Adrenal gland (tissue), 19 donors: ENCODE measurements at regions of chr1 and their contacts with region 1.

Region 1: DNA sequence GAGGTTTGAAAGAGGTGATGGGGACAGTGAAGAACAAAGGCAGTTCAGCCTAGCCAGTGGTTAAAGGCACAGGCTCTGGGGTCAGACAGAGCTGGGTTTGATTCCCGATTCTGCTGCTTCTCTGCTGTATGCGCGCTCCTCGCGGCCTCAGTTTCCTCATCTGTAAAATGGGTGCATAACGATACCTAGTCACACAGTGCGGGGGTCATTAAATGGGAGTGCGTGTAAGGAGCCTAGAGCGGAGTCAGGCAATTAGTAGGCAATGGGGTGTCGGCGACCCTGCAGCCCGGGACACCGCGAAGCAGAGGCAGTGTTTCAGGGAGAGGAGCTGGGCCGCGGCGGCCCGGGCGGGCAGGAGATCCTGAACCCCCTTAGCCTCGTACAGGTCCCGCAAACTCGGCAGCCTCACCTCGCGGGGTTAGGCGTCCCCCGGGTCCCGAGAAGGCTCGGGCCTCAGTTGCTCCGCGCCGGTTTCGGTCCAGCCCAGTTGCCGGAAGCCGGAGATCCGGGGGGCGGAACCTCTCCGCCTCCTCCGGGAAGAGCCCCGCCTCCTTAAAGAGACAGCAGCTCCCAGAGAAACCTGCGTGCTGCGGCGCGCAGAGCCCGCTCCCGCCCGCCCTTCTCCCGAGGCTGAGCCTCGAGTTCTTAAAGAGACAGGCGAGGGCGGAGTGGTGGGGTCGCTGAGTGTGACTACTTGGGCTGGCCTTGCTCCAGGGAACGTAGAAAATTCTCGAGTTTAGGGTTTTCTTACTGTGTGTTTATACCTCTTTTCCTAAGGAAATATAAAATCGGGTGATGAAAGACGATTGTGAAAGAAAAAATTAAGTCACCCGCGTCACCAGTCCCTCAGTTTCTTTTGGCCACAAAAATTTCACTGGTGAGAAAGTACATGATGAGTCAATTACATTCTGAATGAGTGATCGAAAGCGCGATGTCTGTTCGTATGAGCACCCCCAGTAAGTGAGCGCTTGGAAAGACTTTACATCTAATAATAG is at the start of gene YIPF1:
- DNase-seq: peak; percentile 90 to 95 (median 92)
- H3K4me3 ChIP-seq: peak within 1 kb of the TSS; percentile 21 to 94 (median 71)
- H3K27ac ChIP-seq: peak within 1 kb of the TSS; percentile 39 to 79 (median 79)
- H3K4me1 ChIP-seq: peaks cover 10 to 21% of the 10 kb centered on the region in 2 donors
- H3K27me3 ChIP-seq: no peaks in the 10 kb centered on the region
- CTCF ChIP-seq: no peak
- POLR2A ChIP-seq: peak; percentile 5 to 70
- total RNA-seq, gene YIPF1: 24.8 to 59.5 (median 40.0) TPM

Region 2: DNA sequence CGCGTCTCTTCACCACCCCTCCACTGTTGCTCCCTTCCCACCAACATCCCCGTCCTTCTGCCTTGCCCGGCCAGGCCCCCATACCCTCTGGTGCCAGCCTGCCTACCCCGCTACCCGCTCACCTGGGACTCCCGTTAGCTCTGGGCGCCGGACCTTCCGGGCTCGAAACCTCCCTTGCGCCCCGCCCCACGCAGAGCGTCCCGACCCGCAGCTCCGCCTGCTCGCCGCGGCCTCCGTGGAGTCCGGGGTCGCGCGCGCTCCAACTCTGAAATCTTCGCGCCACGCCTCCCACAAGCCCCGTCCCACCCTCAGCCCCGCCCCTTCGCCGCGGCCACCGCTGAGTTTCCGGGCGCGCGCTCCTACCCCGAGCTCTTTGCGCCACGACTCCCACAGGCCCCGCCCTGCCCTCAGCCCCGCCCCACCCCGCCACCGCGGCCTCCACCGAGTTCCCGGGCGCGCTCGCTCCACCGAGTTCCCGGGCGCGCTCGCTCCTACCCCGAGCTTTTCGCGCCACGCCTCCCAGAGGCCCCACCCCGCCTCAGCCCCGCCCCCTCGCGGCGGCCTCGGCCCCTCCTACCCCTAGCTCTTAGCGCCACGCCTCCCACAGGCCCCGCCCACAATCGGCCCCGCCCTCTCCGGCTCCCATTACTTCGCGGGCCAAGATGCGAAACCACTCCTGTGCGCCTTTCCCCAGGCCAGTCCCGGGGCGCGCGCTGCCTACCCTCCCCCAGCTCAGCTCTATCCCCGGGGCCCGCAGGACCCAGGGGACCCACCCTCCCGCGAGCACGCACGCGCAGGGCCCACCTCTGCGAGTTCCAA is 56.0 kb after region 1 on chr1 and contains the start of gene IFT25:
- intact Hi-C with region 1: loop called (anchors 5 to 10 kb)
- DNase-seq: peak; percentile 96 to 99 (median 97)
- H3K4me3 ChIP-seq: peak within 1 kb of the TSS; percentile 21 to 94 (median 78)
- H3K27ac ChIP-seq: peak within 1 kb of the TSS; percentile 70 to 96 (median 93)
- H3K4me1 ChIP-seq: peaks cover 13 to 43% of the 10 kb centered on the region in 2 donors
- H3K27me3 ChIP-seq: no peaks in the 10 kb centered on the region
- CTCF ChIP-seq: no peak
- POLR2A ChIP-seq: peak; percentile 44 to 87
- total RNA-seq, gene IFT25: 7.2 to 53.1 (median 26.6) TPM

Region 3: GRCh38 chr1:53979712-53980450 is 90.3 kb after region 1 on chr1:
- intact Hi-C with region 1: no loop called
- DNase-seq: no peak
- H3K4me3 ChIP-seq: no peak overlapping the region
- H3K27ac ChIP-seq: no peak overlapping the region
- H3K4me1 ChIP-seq: no peaks in the 10 kb centered on the region
- H3K27me3 ChIP-seq: no peaks in the 10 kb centered on the region
- CTCF ChIP-seq: no peak
- POLR2A ChIP-seq: no peak